HEK293T (cell line): ENCODE measurements at regions of chr17 and their contacts with region 1.

Region 1: DNA sequence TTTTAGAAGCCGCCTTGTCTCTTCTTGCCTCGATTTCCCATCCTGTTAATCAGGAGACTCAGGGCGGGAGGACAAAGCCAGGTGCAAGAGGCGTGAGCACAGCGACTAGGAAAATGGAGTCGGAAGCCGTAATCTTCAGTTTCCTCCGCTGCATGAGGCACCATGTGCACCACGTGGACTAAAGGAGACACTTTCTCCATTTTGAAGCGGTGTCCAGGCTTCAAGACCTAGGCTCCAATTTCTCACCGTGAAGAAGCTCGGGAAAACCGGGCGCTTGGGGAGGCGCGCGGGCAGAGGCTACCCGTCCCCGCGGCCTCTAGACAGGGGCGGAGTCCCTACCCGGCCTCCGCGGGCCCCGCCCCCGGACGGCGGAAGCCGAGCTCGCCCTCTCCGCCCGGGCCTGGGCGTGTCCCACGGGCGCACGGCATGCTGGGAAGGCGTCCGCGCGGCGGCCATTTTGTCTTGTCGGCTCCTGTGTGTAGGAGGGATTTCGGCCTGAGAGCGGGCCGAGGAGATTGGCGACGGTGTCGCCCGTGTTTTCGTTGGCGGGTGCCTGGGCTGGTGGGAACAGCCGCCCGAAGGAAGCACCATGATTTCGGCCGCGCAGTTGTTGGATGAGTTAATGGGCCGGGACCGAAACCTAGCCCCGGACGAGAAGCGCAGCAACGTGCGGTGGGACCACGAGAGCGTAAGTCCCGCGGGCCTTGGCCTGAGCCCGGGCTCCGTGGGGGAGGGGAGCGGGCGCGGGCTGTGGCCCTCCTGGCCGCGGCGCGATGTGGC is at the start of gene LUC7L3:
- DNase-seq: peak; percentile 96

Region 2: GRCh38 chr17:50707289-50708049 is 11.9 kb before region 1 on chr17 and contains the start of gene ANKRD40:
- CTCF ChIA-PET with region 1: interaction called, 4 read pairs
- POLR2A ChIA-PET with region 1: interaction called, 57 read pairs
- DNase-seq: peak; percentile 79

Region 3: DNA sequence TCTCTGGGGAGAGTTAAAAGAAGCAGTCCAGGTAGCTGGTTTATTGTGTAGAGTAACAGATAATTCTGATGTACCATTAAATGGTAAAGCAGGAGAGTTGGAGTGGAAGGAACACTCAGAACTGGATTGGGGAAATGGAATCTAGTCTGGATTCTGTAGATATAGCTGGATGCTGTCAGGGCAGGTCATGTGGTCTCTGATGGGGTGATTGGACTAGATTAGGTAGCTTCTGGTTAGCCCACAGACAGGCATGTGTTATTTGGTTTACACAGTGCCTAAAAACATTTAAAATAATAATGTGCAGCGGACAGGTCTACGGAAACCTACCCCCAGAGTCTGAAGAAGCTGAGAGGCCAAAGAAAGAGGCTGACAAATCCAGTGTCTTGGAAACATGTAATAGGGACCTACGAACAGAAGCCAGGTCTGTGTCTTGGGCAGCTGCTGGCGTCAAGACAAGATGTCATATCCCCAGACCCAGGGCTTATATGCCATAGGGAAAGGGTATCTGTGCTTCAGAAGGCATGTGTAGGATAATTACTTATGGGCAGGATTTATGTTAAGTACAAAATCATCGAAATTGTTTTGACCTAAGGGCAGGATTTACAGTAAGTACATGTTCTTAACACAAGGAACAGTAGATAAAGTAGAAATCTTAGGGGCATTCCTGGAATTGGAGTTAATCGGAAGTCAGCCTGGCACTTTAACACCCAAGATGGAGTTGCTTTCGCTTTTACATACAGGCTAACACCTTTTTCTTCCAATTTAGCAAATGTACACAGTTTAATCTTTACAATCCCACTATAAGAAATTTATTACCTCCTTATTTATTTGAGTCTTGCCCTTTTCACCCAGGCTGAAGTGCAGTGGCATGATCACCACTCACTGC is 12.5 kb after region 1 on chr17:
- CTCF ChIA-PET with region 1: interaction called, 3 read pairs
- POLR2A ChIA-PET with region 1: interaction called, 24 read pairs
- DNase-seq: no peak